ENCODE measurements at regions of chr19 and their contacts with region 1.

Region 1: DNA sequence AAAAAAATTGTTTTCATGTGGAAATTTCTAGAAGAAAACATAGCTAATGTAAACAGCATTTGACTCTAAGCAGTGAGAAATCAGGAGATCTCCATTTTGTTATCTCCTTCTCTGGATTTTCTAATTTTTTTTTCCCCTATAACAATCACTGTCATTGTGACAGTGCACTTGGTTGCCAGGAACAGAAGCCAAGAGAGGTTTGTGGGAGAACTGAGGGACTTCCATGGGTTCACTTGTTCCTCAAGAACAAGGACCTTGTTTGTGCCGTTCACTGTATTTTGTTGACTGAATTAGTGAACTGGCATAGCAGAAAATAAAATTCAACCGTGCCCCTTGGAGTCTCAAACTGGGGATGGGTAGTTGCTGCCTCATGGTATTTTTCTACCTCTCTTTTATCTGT is 17.1 kb downstream of the SHISA7 start:
- DNase-seq: no peak
- H3K4me3 ChIP-seq: no peak overlapping the region
- H3K27ac ChIP-seq: no peak overlapping the region
- H3K4me1 ChIP-seq: no peaks in the 10 kb centered on the region
- H3K27me3 ChIP-seq: peaks cover 46% of the 10 kb centered on the region
- CTCF ChIP-seq: no peak
- EP300 ChIP-seq: no peak
- POLR2A ChIP-seq: no peak

Region 2: GRCh38 chr19:55146078-55146704 is 279.9 kb before region 1 on chr19:
- in situ Hi-C with region 1: loop called in 2 of 4 experiments (anchors 10 kb)
- intact Hi-C with region 1: no loop called
- DNase-seq: no peak
- H3K4me3 ChIP-seq: no peak overlapping the region
- H3K27ac ChIP-seq: no peak overlapping the region
- H3K4me1 ChIP-seq: peaks cover 0 to 13% (median 11%) of the 10 kb centered on the region in 4 donors
- H3K27me3 ChIP-seq: peaks cover 97% of the 10 kb centered on the region
- CTCF ChIP-seq: peak in 4 of 5 experiments; percentile 12 to 33 (median 24)
- EP300 ChIP-seq: no peak
- POLR2A ChIP-seq: no peak